Activated CD4-positive, alpha-beta memory T cell treated with anti-CD3 and anti-CD28 coated beads, Interleukin-2, amount 10 ng/mL, durations not matched to agents 7 days and 5 days (primary cell): ENCODE measurements at regions of chr20 and their contacts with region 1.

Region 1: GRCh38 chr20:62793912-62794724 is 2.2 kb upstream of the MRGBP start:
- DNase-seq: peak; percentile 97
- H3K4me3 Mint-ChIP-seq: peak overlapping the region; percentile 86
- H3K27ac Mint-ChIP-seq: peak overlapping the region; percentile 97
- H3K4me1 Mint-ChIP-seq: peaks cover 39% of the 10 kb centered on the region
- H3K27me3 Mint-ChIP-seq: peaks cover 3% of the 10 kb centered on the region

Region 2: GRCh38 chr20:62500237-62500864 is 293.8 kb before region 1 on chr20:
- CTCF ChIA-PET with region 1: interaction called, 10 read pairs
- POLR2A ChIA-PET with region 1: interaction called, 4 read pairs
- DNase-seq: peak; percentile 80
- H3K4me3 Mint-ChIP-seq: no peak overlapping the region
- H3K27ac Mint-ChIP-seq: no peak overlapping the region
- H3K4me1 Mint-ChIP-seq: peaks cover 26% of the 10 kb centered on the region
- H3K27me3 Mint-ChIP-seq: no peaks in the 10 kb centered on the region

Region 3: GRCh38 chr20:62623488-62624324 is 170.4 kb before region 1 on chr20:
- CTCF ChIA-PET with region 1: interaction called, 10 read pairs
- POLR2A ChIA-PET with region 1: interaction called, 7 read pairs
- DNase-seq: peak; percentile 96
- H3K4me3 Mint-ChIP-seq: peak overlapping the region; percentile 65
- H3K27ac Mint-ChIP-seq: peak overlapping the region; percentile 97
- H3K4me1 Mint-ChIP-seq: peaks cover 48% of the 10 kb centered on the region
- H3K27me3 Mint-ChIP-seq: no peaks in the 10 kb centered on the region

Region 4: GRCh38 chr20:62652051-62652926 is 141.8 kb before region 1 on chr20:
- CTCF ChIA-PET with region 1: interaction called, 11 read pairs
- POLR2A ChIA-PET with region 1: interaction called, 16 read pairs
- DNase-seq: peak; percentile 79
- H3K4me3 Mint-ChIP-seq: peak overlapping the region; percentile 75
- H3K27ac Mint-ChIP-seq: peak overlapping the region; percentile 96
- H3K4me1 Mint-ChIP-seq: peaks cover 64% of the 10 kb centered on the region
- H3K27me3 Mint-ChIP-seq: no peaks in the 10 kb centered on the region

Region 5: GRCh38 chr20:62766714-62767113 is 27.4 kb before region 1 on chr20:
- CTCF ChIA-PET with region 1: no interaction called
- POLR2A ChIA-PET with region 1: no interaction called
- DNase-seq: no peak
- H3K4me3 Mint-ChIP-seq: no peak overlapping the region
- H3K27ac Mint-ChIP-seq: no peak overlapping the region
- H3K4me1 Mint-ChIP-seq: no peaks in the 10 kb centered on the region
- H3K27me3 Mint-ChIP-seq: peaks cover 5% of the 10 kb centered on the region

Region 6: DNA sequence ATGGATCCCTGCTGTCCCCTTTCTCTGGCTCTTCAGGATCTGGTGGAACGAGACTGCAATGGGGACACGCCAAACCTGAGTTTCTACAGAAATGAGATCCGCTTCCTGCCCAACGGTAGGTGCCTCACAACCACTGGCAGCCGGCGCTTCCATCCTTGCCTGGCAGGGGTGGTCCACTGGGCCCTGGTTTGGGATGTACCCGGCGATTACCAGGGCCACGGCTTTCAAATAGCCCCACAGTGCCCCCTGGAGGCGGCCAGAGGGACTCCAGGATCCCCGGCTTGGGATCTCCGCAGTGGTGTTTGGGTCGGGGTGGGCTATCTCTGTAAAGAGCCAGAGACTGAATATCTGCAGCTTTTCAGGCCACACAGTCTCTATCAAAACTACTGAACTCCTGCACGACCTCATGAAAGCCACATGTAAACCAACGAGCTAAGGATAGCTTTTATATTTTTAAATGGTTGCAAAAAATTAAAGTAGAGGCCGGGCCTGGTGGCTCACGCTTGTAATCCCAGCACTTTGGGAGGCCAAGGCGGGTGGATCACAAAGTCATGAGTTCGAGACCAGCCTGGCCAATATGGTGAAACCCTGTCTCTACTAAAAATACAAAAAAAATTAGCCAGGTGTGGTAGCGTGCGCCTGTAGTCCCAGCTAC is 14.2 kb after region 1 on chr20:
- CTCF ChIA-PET with region 1: interaction called, 24 read pairs
- POLR2A ChIA-PET with region 1: interaction called, 33 read pairs
- DNase-seq: peak; percentile 76
- H3K4me3 Mint-ChIP-seq: no peak overlapping the region
- H3K27ac Mint-ChIP-seq: peak overlapping the region; percentile 52
- H3K4me1 Mint-ChIP-seq: peaks cover 28% of the 10 kb centered on the region
- H3K27me3 Mint-ChIP-seq: no peaks in the 10 kb centered on the region

Region 7: DNA sequence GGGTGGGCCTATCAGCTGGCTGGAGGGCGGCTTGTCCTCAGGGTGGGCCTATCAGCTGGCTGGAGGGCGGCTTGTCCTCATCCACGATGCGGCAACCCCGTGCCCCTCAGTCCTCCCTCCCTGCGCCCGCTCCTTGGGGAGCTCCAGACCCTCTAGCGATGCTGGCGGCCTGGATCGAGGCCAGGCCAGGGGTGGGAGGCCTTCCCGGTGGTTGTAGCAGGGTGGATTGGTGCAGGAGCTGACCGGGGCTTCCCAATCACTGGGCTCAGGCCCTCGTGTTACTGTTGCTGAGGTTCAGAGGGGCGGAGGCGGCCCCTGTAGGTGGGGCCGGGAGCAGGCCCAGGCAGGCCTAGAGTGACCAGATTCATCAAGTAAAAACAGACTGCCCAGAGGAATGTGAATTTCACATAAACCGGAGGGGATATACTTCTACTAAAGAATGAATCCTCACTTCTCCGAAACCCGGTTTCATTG is 167.2 kb after region 1 on chr20:
- CTCF ChIA-PET with region 1: no interaction called
- POLR2A ChIA-PET with region 1: no interaction called
- DNase-seq: no peak
- H3K4me3 Mint-ChIP-seq: no peak overlapping the region
- H3K27ac Mint-ChIP-seq: no peak overlapping the region
- H3K4me1 Mint-ChIP-seq: no peaks in the 10 kb centered on the region
- H3K27me3 Mint-ChIP-seq: no peaks in the 10 kb centered on the region